ENCODE measurements at regions of chr15 and their contacts with region 1.

Region 1: GRCh38 chr15:64247906-64248541 is 85.2 kb upstream of the PPIB start:
- DNase-seq: peak; percentile 95
- H3K4me3 ChIP-seq: no peak overlapping the region
- H3K27ac ChIP-seq: peak overlapping the region; percentile 91
- H3K4me1 ChIP-seq: peaks cover 15% of the 10 kb centered on the region
- H3K27me3 ChIP-seq: no peaks in the 10 kb centered on the region
- CTCF ChIP-seq: no peak
- POLR2A ChIP-seq: no peak

Region 2: DNA sequence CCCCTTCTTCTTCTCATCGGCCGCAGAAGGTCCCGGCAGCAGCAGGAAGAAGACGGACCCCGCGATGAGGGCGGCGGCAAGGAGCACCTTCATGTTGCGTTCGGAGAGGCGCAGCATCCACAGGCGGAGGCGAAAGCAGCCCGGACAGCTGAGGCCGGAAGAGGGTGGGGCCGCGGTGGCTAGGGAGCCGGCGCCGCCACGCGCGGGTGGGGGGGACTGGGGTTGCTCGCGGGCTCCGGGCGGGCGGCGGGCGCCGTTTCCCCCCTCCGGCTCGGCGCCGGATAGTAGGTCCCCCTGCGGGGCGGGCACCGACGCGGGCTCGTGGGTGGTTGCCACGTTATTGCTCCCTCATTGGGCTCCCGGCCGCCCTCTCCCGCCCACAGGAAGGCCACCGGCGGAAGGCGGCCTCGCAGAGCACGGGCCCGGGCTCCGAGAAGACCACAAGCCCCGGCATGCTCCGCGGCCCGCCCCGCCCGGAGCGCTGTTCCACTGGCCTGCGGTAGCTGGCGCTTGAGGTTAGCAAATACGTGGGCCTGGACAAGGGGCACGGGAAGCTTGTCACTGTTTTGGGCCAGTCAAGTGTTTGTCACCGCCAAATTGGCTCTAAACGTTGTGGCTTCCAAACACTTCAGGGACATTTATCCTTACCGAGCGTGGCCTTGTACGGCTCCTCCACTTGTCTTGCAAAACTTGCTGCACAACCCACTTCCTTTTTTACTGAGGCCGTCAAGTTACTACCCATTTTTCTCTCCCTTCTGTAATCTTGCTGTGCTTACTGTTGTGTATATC is 85.0 kb before region 1 on chr15 and contains the start of gene PPIB:
- CTCF ChIA-PET with region 1: no interaction called
- POLR2A ChIA-PET with region 1: no interaction called
- dilution Hi-C with region 1: no loop called
- intact Hi-C with region 1: loop called (anchors 1 kb)
- DNase-seq: peak; percentile 98
- H3K4me3 ChIP-seq: peak within 1 kb of the TSS; percentile 77 to 96 (median 94)
- H3K27ac ChIP-seq: peak within 1 kb of the TSS; percentile 70
- H3K4me1 ChIP-seq: peaks cover 16% of the 10 kb centered on the region
- H3K27me3 ChIP-seq: no peaks in the 10 kb centered on the region
- CTCF ChIP-seq: peak; percentile 39 to 59
- POLR2A ChIP-seq: peak; percentile 95
- total RNA-seq, gene PPIB: 818 and 840 TPM in 2 replicates

Region 3: GRCh38 chr15:64235552-64235951 is 12.5 kb before region 1 on chr15:
- CTCF ChIA-PET with region 1: interaction called, 11 read pairs
- POLR2A ChIA-PET with region 1: no interaction called
- dilution Hi-C with region 1: no loop called
- intact Hi-C with region 1: no loop called
- DNase-seq: no peak
- H3K4me3 ChIP-seq: no peak overlapping the region
- H3K27ac ChIP-seq: no peak overlapping the region
- H3K4me1 ChIP-seq: peaks cover 2% of the 10 kb centered on the region
- H3K27me3 ChIP-seq: no peaks in the 10 kb centered on the region
- CTCF ChIP-seq: no peak
- POLR2A ChIP-seq: no peak

Region 4: DNA sequence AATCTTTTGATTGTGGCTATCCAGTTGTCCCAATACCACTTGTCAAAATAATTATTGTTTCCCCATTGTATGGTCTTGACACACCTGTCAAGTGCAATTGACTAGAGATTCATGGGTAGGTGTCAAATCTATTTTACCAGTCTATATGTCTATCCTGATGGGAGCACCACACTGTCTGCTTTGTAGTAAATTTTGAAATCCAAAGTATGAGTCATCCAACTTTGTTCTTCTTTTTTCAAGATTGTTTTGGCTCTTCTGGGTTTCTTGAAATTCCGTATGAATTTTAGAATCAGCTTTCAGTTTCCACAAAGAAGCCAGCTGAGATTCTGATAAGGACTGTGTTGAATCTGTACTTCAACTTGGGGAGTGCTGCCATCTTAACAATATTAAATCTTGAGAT is 36.0 kb after region 1 on chr15:
- CTCF ChIA-PET with region 1: no interaction called
- POLR2A ChIA-PET with region 1: no interaction called
- dilution Hi-C with region 1: no loop called
- intact Hi-C with region 1: no loop called
- DNase-seq: no peak
- H3K4me3 ChIP-seq: no peak overlapping the region
- H3K27ac ChIP-seq: no peak overlapping the region
- H3K4me1 ChIP-seq: no peaks in the 10 kb centered on the region
- H3K27me3 ChIP-seq: no peaks in the 10 kb centered on the region
- CTCF ChIP-seq: no peak
- POLR2A ChIP-seq: no peak

Region 5: DNA sequence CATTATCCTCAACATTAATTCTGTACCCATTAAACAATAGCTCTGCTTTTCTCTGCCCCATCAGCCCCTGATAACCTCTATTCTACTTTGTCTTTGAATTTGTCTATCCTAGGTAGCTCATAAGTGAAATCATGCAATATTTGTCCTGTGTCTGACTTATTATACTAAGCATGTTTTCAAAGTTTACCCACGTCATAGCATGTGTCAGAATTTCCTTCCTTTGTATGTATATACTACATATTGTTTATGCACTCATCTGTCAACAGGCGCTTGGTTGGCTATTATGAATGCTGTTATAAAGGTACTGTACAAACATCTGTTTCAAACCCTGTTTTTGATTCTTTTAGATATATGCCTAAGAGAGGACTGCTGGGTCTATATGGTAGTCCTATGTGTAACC is 89.7 kb after region 1 on chr15:
- CTCF ChIA-PET with region 1: interaction called, 3 read pairs
- POLR2A ChIA-PET with region 1: interaction called, 11 read pairs
- dilution Hi-C with region 1: no loop called
- intact Hi-C with region 1: loop called (anchors 1 kb)
- DNase-seq: peak; percentile 88
- H3K4me3 ChIP-seq: no peak overlapping the region
- H3K27ac ChIP-seq: peak overlapping the region; percentile 76
- H3K4me1 ChIP-seq: peaks cover 9% of the 10 kb centered on the region
- H3K27me3 ChIP-seq: no peaks in the 10 kb centered on the region
- CTCF ChIP-seq: no peak
- POLR2A ChIP-seq: no peak

Measured in endothelial cell of umbilical vein (primary cell).